ENCODE measurements at regions of chr4 and their contacts with region 1.

Region 1: GRCh38 chr4:26081795-26082498 is 167.9 kb downstream of the SMIM20 start:
- DNase-seq: peak; percentile 50 to 59 (median 56)
- ATAC-seq: peak; percentile 92
- H3K4me3 ChIP-seq: no peak overlapping the region
- H3K27ac ChIP-seq: no peak overlapping the region
- H3K4me1 ChIP-seq: no peaks in the 10 kb centered on the region
- H3K27me3 ChIP-seq: peaks cover 5 to 16% of the 10 kb centered on the region in 2 experiments; a peak in 4 of 5 replicates
- CTCF ChIP-seq: peak; percentile 46 to 78 (median 63)
- EP300 ChIP-seq: no peak
- POLR2A ChIP-seq: no peak
- RAD21 ChIP-seq: peak; percentile 59 to 80

Region 2: DNA sequence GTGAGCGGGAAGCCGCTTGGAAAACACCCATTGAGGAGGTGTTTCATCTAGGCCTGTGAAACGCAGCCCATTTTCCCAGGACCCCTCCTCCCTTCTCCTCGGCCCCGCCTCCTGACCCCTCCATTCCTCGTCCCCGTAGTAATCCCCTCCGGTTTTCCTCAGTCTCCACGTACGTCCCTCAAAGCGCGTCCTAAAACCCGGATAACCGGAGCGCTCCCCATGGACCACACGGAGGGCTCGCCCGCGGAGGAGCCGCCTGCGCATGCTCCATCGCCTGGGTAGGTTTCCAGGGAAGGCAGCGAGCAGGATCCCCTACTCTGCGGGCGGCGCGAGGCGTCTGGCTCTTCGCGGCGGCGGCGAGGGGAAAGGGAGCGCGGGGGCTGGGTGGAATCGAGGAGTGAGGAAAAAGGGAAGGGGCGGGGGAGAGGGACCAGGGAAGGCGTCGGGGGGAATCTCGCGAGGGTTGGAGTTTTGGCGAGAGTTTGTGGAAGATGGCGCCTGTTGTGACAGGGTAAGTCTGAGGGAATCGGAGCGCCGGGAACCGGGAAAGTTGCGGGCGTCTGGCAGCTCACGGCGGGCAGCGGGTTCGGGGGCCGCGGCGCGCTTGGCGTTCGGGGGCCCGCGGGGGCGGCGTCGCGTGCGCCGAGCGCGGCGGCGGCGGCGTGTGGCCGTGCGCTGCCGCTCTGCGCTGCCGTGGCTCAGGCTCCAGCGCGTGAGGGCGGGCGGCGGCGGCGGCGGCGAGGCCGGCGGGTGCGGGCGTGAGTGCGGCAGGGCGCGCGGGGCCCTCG is 238.8 kb after region 1 on chr4 and contains the start of gene RBPJ:
- CTCF ChIA-PET with region 1: no interaction called
- POLR2A ChIA-PET with region 1: no interaction called
- in situ Hi-C with region 1: no loop called
- intact Hi-C with region 1: loop called (anchors 5 kb)
- DNase-seq: peak; percentile 85 to 92 (median 86)
- ATAC-seq: peak; percentile 73
- H3K4me3 ChIP-seq: peak within 1 kb of the TSS; percentile 82
- H3K27ac ChIP-seq: peak within 1 kb of the TSS; percentile 73
- H3K4me1 ChIP-seq: peaks cover 16 to 23% of the 10 kb centered on the region in 2 experiments
- H3K27me3 ChIP-seq: no peaks in the 10 kb centered on the region
- CTCF ChIP-seq: peak in 1 of 3 experiments; percentile 2; a peak in 1 of 6 replicates
- EP300 ChIP-seq: no peak
- POLR2A ChIP-seq: peak; percentile 82
- RAD21 ChIP-seq: no peak
- polyA plus RNA-seq, gene RBPJ: 23.1 to 42.0 TPM

Region 3: DNA sequence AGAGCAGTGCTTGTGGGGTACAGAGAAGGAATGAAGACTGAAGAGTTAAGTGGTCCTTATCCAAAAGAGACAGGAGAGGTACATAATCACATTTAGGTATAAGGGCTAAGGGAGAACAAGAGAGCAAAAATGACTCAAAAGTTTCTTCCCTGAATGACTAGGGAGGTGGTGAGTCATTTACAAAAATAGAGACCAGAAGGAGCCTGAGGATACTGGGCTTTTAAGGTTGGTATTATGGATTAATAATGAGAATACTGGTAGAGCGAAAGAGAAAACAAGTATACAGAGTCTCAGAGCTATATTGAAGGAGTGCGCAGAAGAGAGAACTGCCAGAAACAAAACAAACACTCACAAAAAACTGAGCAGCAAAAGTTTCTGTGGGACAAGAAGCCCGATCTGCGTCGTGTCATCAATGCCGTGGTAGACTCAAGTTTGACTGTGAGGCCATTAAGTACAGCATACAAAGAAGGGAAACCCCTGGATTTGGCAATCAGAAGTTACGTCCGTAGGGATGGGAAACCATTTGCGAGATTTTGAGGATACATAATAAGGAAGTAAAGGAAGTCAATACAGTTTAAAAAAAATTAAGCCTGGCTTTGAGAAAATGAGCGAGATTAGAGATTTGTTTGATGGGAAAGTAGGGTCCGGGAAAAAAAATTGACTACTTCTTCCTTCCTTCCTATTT is 649.5 kb after region 1 on chr4:
- CTCF ChIA-PET with region 1: no interaction called
- POLR2A ChIA-PET with region 1: no interaction called
- in situ Hi-C with region 1: no loop called
- intact Hi-C with region 1: loop called (anchors 5 kb)
- DNase-seq: no peak
- ATAC-seq: no peak
- H3K4me3 ChIP-seq: no peak overlapping the region
- H3K27ac ChIP-seq: no peak overlapping the region
- H3K4me1 ChIP-seq: no peaks in the 10 kb centered on the region
- H3K27me3 ChIP-seq: no peaks in the 10 kb centered on the region
- CTCF ChIP-seq: no peak
- EP300 ChIP-seq: no peak
- POLR2A ChIP-seq: no peak
- RAD21 ChIP-seq: no peak

Measured in K562 (cell line).